CD8-positive, alpha-beta T cell (primary cell): ENCODE measurements at regions of chr3 and their contacts with region 1.

Region 1: DNA sequence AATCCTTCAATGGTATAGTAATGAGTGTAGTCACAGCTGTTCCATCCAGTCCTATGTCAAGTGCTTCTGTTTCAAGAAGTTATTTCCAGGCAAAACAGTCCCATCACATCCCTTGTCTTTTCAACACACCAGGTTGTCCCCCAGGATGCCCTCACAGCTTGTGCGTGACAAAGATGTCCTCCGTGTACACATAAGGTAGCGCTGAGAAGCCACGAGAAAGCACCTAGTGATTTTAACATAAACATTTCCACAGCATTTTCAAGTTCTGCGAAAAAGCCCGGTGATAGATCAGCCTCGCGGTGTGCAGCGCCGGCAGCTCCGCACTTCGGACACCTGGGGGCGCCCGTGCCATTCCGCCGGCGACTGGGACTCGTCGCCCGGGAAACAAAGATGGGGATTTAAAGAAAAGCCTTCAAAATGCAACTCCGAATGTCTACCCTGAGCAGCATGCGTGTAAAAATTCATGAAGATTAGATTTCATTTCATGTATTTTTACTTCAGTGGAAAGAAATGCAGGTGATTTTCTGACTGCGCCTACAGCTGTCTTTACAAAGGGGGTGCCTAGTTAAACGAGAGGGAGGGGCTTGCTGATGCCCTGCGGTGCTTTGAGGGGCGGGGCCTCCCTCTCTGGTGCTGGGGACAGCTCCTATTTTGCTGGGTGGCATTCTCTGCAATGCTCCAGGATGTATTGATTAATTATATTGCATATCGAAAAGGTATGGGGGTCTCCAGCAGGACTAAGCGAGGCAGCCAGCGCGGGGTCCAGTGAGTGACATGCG is 49.9 kb downstream of the KY start:
- DNase-seq: peak; percentile 16 to 63 (median 50)
- ATAC-seq: peak; percentile 82
- H3K4me3 ChIP-seq: no peak overlapping the region
- H3K4me3 Mint-ChIP-seq: peak overlapping the region; percentile 26
- H3K27ac ChIP-seq: no peak overlapping the region
- H3K27ac Mint-ChIP-seq: no peak overlapping the region
- H3K4me1 ChIP-seq: no peaks in the 10 kb centered on the region
- H3K4me1 Mint-ChIP-seq: peaks cover 6% of the 10 kb centered on the region
- H3K27me3 ChIP-seq: no peaks in the 10 kb centered on the region
- H3K27me3 Mint-ChIP-seq: peaks cover 10% of the 10 kb centered on the region
- CTCF ChIP-seq: peak; percentile 72

Region 2: GRCh38 chr3:134614955-134615354 is 14.1 kb after region 1 on chr3:
- CTCF ChIA-PET with region 1: interaction called, 15 read pairs
- POLR2A ChIA-PET with region 1: no interaction called
- intact Hi-C with region 1: no loop called
- DNase-seq: no peak
- ATAC-seq: no peak
- H3K4me3 ChIP-seq: no peak overlapping the region
- H3K4me3 Mint-ChIP-seq: no peak overlapping the region
- H3K27ac ChIP-seq: no peak overlapping the region
- H3K27ac Mint-ChIP-seq: no peak overlapping the region
- H3K4me1 ChIP-seq: no peaks in the 10 kb centered on the region
- H3K4me1 Mint-ChIP-seq: no peaks in the 10 kb centered on the region
- H3K27me3 ChIP-seq: no peaks in the 10 kb centered on the region
- H3K27me3 Mint-ChIP-seq: peaks cover 4% of the 10 kb centered on the region
- CTCF ChIP-seq: no peak

Region 3: DNA sequence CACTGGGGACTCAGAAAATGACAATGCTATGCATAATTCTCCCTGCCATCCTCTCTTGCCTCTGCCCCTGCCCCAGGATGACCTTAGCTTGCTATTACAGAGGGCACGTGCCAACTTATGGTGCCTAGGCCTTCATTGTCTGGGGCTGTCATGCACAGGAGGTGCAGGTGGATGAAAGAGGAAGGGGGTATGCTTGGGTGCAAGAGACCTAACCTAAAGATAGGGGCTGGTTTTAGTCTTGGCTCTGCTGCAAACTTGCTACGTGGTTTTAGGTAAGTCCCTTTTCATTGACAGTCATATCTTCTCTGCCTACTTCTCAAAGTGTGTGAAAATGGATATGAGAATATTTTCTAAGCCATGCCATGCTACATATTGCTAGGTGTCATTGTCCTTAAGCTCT is 355.5 kb after region 1 on chr3:
- CTCF ChIA-PET with region 1: no interaction called
- POLR2A ChIA-PET with region 1: no interaction called
- intact Hi-C with region 1: no loop called
- DNase-seq: no peak
- ATAC-seq: no peak
- H3K4me3 ChIP-seq: no peak overlapping the region
- H3K4me3 Mint-ChIP-seq: no peak overlapping the region
- H3K27ac ChIP-seq: no peak overlapping the region
- H3K27ac Mint-ChIP-seq: no peak overlapping the region
- H3K4me1 ChIP-seq: no peaks in the 10 kb centered on the region
- H3K4me1 Mint-ChIP-seq: no peaks in the 10 kb centered on the region
- H3K27me3 ChIP-seq: no peaks in the 10 kb centered on the region
- H3K27me3 Mint-ChIP-seq: no peaks in the 10 kb centered on the region
- CTCF ChIP-seq: no peak

Region 4: GRCh38 chr3:135056084-135056730 is 455.3 kb after region 1 on chr3:
- CTCF ChIA-PET with region 1: no interaction called
- POLR2A ChIA-PET with region 1: no interaction called
- intact Hi-C with region 1: no loop called
- DNase-seq: no peak
- ATAC-seq: no peak
- H3K4me3 ChIP-seq: no peak overlapping the region
- H3K4me3 Mint-ChIP-seq: no peak overlapping the region
- H3K27ac ChIP-seq: no peak overlapping the region
- H3K27ac Mint-ChIP-seq: no peak overlapping the region
- H3K4me1 ChIP-seq: no peaks in the 10 kb centered on the region
- H3K4me1 Mint-ChIP-seq: no peaks in the 10 kb centered on the region
- H3K27me3 ChIP-seq: no peaks in the 10 kb centered on the region
- H3K27me3 Mint-ChIP-seq: peaks cover 2% of the 10 kb centered on the region
- CTCF ChIP-seq: no peak

Region 5: GRCh38 chr3:135895106-135895733 is 1294.3 kb after region 1 on chr3:
- CTCF ChIA-PET with region 1: interaction called, 4 read pairs
- POLR2A ChIA-PET with region 1: no interaction called
- intact Hi-C with region 1: loop called in 1 of 2 experiments (anchors 10 kb)
- DNase-seq: peak in 4 of 9 experiments; percentile 8 to 32 (median 20)
- ATAC-seq: no peak
- H3K4me3 ChIP-seq: no peak overlapping the region
- H3K4me3 Mint-ChIP-seq: no peak overlapping the region
- H3K27ac ChIP-seq: no peak overlapping the region
- H3K27ac Mint-ChIP-seq: no peak overlapping the region
- H3K4me1 ChIP-seq: no peaks in the 10 kb centered on the region
- H3K4me1 Mint-ChIP-seq: no peaks in the 10 kb centered on the region
- H3K27me3 ChIP-seq: no peaks in the 10 kb centered on the region
- H3K27me3 Mint-ChIP-seq: peaks cover 6% of the 10 kb centered on the region
- CTCF ChIP-seq: peak; percentile 35